CD8-positive, alpha-beta T cell (primary cell): ENCODE measurements at regions of chr1 and their contacts with region 1.

Region 1: DNA sequence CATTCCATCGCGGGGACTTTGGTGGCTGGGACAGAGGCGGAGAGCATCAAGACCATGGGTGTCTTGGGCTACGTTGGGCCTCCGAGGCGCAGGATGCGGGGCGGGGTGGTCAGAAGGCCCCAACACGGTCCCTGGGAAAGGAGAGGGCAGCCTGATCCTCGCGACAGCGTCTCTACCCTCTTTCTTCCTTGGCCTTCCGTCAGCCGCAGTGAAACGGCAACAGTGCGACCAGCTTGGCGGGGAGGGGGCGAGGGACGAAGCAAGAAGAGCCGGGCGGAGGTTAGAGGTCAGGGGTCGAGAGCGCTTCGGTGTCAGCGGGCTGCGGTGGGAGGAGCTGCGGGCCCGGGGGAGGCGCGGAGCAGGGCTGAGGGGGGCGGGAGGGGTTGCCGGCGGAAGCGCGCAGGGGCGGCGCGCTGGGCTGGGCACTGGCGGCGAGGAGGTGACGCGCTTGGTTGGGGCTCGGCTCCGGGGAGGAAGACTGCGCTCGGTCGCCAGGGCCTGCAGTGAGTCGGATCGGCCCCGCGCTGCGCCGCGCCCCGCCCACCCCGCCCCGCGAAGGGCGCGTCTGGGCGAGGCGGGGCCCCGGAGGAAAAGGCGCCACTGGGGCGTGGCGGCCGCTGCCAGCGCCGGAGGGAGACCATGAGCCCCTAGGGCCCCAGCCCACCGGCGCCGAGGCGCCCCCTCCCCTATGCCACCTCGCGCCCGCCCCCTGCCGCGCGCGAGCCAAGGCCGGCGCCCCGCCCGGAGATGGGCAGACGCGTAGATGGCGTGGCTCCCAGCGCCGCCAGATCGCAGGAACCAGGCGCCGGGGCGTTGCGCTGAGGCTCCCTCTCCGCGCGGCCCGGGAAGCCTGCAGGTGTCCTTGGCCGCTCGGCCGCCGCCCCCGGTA is at the start of gene KCNC4:
- DNase-seq: peak; percentile 87 to 97 (median 91)
- ATAC-seq: peak; percentile 84
- H3K4me3 ChIP-seq: peak within 1 kb of the TSS; percentile 68 to 73
- H3K4me3 Mint-ChIP-seq: peak within 1 kb of the TSS; percentile 89
- H3K27ac ChIP-seq: peak within 1 kb of the TSS; percentile 69 to 90
- H3K27ac Mint-ChIP-seq: peak within 1 kb of the TSS; percentile 93
- H3K4me1 ChIP-seq: peaks cover 49% of the 10 kb centered on the region
- H3K4me1 Mint-ChIP-seq: peaks cover 54% of the 10 kb centered on the region
- H3K27me3 ChIP-seq: peaks cover 0 to 5% of the 10 kb centered on the region in 2 experiments
- H3K27me3 Mint-ChIP-seq: no peaks in the 10 kb centered on the region
- CTCF ChIP-seq: no peak
- total RNA-seq, gene KCNC4: 11.4 to 13.1 TPM

Region 2: GRCh38 chr1:109483672-109484518 is 726.1 kb before region 1 on chr1 and contains the start of gene ATXN7L2:
- CTCF ChIA-PET with region 1: no interaction called
- POLR2A ChIA-PET with region 1: no interaction called
- intact Hi-C with region 1: loop called in 1 of 2 experiments (anchors 5 kb)
- DNase-seq: peak; percentile 87 to 97 (median 92)
- ATAC-seq: peak; percentile 81
- H3K4me3 ChIP-seq: peak within 1 kb of the TSS; percentile 78 to 90
- H3K4me3 Mint-ChIP-seq: peak within 1 kb of the TSS; percentile 94
- H3K27ac ChIP-seq: peak within 1 kb of the TSS; percentile 78 to 93
- H3K27ac Mint-ChIP-seq: peak within 1 kb of the TSS; percentile 91
- H3K4me1 ChIP-seq: peaks cover 22% of the 10 kb centered on the region
- H3K4me1 Mint-ChIP-seq: peaks cover 35% of the 10 kb centered on the region
- H3K27me3 ChIP-seq: no peaks in the 10 kb centered on the region
- H3K27me3 Mint-ChIP-seq: peaks cover 2% of the 10 kb centered on the region
- CTCF ChIP-seq: no peak
- total RNA-seq, gene ATXN7L2: 16.8 to 19.4 TPM

Region 3: GRCh38 chr1:109762821-109763645 is 446.9 kb before region 1 on chr1:
- CTCF ChIA-PET with region 1: no interaction called
- POLR2A ChIA-PET with region 1: no interaction called
- intact Hi-C with region 1: no loop called
- DNase-seq: no peak
- ATAC-seq: no peak
- H3K4me3 ChIP-seq: no peak overlapping the region
- H3K4me3 Mint-ChIP-seq: no peak overlapping the region
- H3K27ac ChIP-seq: no peak overlapping the region
- H3K27ac Mint-ChIP-seq: no peak overlapping the region
- H3K4me1 ChIP-seq: no peaks in the 10 kb centered on the region
- H3K4me1 Mint-ChIP-seq: no peaks in the 10 kb centered on the region
- H3K27me3 ChIP-seq: no peaks in the 10 kb centered on the region
- H3K27me3 Mint-ChIP-seq: no peaks in the 10 kb centered on the region
- CTCF ChIP-seq: no peak

Region 4: GRCh38 chr1:110144366-110144765 is 65.6 kb before region 1 on chr1:
- CTCF ChIA-PET with region 1: no interaction called
- POLR2A ChIA-PET with region 1: no interaction called
- intact Hi-C with region 1: no loop called
- DNase-seq: no peak
- ATAC-seq: no peak
- H3K4me3 ChIP-seq: no peak overlapping the region
- H3K4me3 Mint-ChIP-seq: no peak overlapping the region
- H3K27ac ChIP-seq: no peak overlapping the region
- H3K27ac Mint-ChIP-seq: no peak overlapping the region
- H3K4me1 ChIP-seq: no peaks in the 10 kb centered on the region
- H3K4me1 Mint-ChIP-seq: no peaks in the 10 kb centered on the region
- H3K27me3 ChIP-seq: no peaks in the 10 kb centered on the region
- H3K27me3 Mint-ChIP-seq: peaks cover 33% of the 10 kb centered on the region
- CTCF ChIP-seq: no peak

Region 5: GRCh38 chr1:110224240-110224995 is 14.5 kb after region 1 on chr1:
- CTCF ChIA-PET with region 1: interaction called, 13 read pairs
- POLR2A ChIA-PET with region 1: no interaction called
- intact Hi-C with region 1: loop called in 1 of 2 experiments (anchors 1 kb)
- DNase-seq: no peak
- ATAC-seq: no peak
- H3K4me3 ChIP-seq: no peak overlapping the region
- H3K4me3 Mint-ChIP-seq: no peak overlapping the region
- H3K27ac ChIP-seq: no peak overlapping the region
- H3K27ac Mint-ChIP-seq: no peak overlapping the region
- H3K4me1 ChIP-seq: no peaks in the 10 kb centered on the region
- H3K4me1 Mint-ChIP-seq: no peaks in the 10 kb centered on the region
- H3K27me3 ChIP-seq: no peaks in the 10 kb centered on the region
- H3K27me3 Mint-ChIP-seq: no peaks in the 10 kb centered on the region
- CTCF ChIP-seq: no peak

Region 6: GRCh38 chr1:110292031-110292741 is 82.2 kb after region 1 on chr1:
- CTCF ChIA-PET with region 1: interaction called, 11 read pairs
- POLR2A ChIA-PET with region 1: no interaction called
- intact Hi-C with region 1: no loop called
- DNase-seq: no peak
- ATAC-seq: no peak
- H3K4me3 ChIP-seq: no peak overlapping the region
- H3K4me3 Mint-ChIP-seq: no peak overlapping the region
- H3K27ac ChIP-seq: no peak overlapping the region
- H3K27ac Mint-ChIP-seq: no peak overlapping the region
- H3K4me1 ChIP-seq: no peaks in the 10 kb centered on the region
- H3K4me1 Mint-ChIP-seq: no peaks in the 10 kb centered on the region
- H3K27me3 ChIP-seq: no peaks in the 10 kb centered on the region
- H3K27me3 Mint-ChIP-seq: no peaks in the 10 kb centered on the region
- CTCF ChIP-seq: no peak

Region 7: GRCh38 chr1:110407260-110408210 is 197.6 kb after region 1 on chr1 and contains the start of gene LAMTOR5:
- CTCF ChIA-PET with region 1: interaction called, 10 read pairs
- POLR2A ChIA-PET with region 1: interaction called, 3 read pairs
- intact Hi-C with region 1: loop called (anchors 1 kb)
- DNase-seq: peak; percentile 83 to 95 (median 89)
- ATAC-seq: peak; percentile 93
- H3K4me3 ChIP-seq: peak within 1 kb of the TSS; percentile 92 to 99
- H3K4me3 Mint-ChIP-seq: peak within 1 kb of the TSS; percentile 99
- H3K27ac ChIP-seq: peak within 1 kb of the TSS; percentile 91 to 92
- H3K27ac Mint-ChIP-seq: peak within 1 kb of the TSS; percentile 99
- H3K4me1 ChIP-seq: peaks cover 23% of the 10 kb centered on the region
- H3K4me1 Mint-ChIP-seq: peaks cover 29% of the 10 kb centered on the region
- H3K27me3 ChIP-seq: no peaks in the 10 kb centered on the region
- H3K27me3 Mint-ChIP-seq: no peaks in the 10 kb centered on the region
- CTCF ChIP-seq: no peak
- total RNA-seq, gene LAMTOR5: 106 to 109 TPM

Region 8: GRCh38 chr1:110495926-110496600 is 286.1 kb after region 1 on chr1:
- CTCF ChIA-PET with region 1: interaction called, 57 read pairs
- POLR2A ChIA-PET with region 1: no interaction called
- intact Hi-C with region 1: no loop called
- DNase-seq: peak; percentile 58 to 82 (median 77)
- ATAC-seq: peak; percentile 80
- H3K4me3 ChIP-seq: no peak overlapping the region
- H3K4me3 Mint-ChIP-seq: no peak overlapping the region
- H3K27ac ChIP-seq: no peak overlapping the region
- H3K27ac Mint-ChIP-seq: no peak overlapping the region
- H3K4me1 ChIP-seq: no peaks in the 10 kb centered on the region
- H3K4me1 Mint-ChIP-seq: no peaks in the 10 kb centered on the region
- H3K27me3 ChIP-seq: no peaks in the 10 kb centered on the region
- H3K27me3 Mint-ChIP-seq: no peaks in the 10 kb centered on the region
- CTCF ChIP-seq: peak; percentile 78

Region 9: DNA sequence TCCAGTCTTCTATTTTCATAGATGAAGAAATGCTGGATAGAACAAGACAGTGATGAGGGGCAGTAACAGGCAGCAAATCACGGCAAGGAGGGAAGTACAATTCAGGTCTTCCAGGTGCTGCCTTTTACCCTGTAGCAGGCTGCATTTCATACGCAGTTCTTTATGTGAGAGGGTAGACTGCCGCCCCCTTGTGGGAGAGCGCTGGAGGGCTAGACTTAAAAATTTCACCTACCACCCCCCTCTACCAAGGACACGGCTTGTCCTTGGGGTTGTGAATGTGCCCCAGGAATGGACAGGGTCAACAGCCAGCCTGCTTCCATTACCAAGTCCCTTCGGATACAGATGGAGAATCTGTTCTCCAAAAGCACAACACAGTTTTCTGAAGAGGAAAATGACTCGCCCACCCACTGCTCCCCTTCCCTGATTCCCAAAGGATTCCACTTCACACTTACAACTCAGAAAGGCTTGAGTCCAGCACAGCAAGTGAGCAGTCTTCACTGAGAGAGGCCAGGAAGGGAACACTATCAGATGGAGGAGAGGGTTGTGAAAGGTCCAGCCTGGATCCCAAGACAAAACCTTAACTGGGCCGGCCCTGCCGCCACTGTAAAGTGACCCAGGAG is 1231.7 kb after region 1 on chr1:
- CTCF ChIA-PET with region 1: no interaction called
- POLR2A ChIA-PET with region 1: no interaction called
- intact Hi-C with region 1: loop called in 1 of 2 experiments (anchors 5 kb)
- DNase-seq: peak; percentile 42 to 80 (median 71)
- ATAC-seq: peak; percentile 97
- H3K4me3 ChIP-seq: no peak overlapping the region
- H3K4me3 Mint-ChIP-seq: no peak overlapping the region
- H3K27ac ChIP-seq: no peak overlapping the region
- H3K27ac Mint-ChIP-seq: peak overlapping the region; percentile 80
- H3K4me1 ChIP-seq: peaks cover 16% of the 10 kb centered on the region
- H3K4me1 Mint-ChIP-seq: peaks cover 42% of the 10 kb centered on the region
- H3K27me3 ChIP-seq: no peaks in the 10 kb centered on the region
- H3K27me3 Mint-ChIP-seq: no peaks in the 10 kb centered on the region
- CTCF ChIP-seq: peak; percentile 57